ENCODE measurements at regions of chr5 and their contacts with region 1.

Region 1: DNA sequence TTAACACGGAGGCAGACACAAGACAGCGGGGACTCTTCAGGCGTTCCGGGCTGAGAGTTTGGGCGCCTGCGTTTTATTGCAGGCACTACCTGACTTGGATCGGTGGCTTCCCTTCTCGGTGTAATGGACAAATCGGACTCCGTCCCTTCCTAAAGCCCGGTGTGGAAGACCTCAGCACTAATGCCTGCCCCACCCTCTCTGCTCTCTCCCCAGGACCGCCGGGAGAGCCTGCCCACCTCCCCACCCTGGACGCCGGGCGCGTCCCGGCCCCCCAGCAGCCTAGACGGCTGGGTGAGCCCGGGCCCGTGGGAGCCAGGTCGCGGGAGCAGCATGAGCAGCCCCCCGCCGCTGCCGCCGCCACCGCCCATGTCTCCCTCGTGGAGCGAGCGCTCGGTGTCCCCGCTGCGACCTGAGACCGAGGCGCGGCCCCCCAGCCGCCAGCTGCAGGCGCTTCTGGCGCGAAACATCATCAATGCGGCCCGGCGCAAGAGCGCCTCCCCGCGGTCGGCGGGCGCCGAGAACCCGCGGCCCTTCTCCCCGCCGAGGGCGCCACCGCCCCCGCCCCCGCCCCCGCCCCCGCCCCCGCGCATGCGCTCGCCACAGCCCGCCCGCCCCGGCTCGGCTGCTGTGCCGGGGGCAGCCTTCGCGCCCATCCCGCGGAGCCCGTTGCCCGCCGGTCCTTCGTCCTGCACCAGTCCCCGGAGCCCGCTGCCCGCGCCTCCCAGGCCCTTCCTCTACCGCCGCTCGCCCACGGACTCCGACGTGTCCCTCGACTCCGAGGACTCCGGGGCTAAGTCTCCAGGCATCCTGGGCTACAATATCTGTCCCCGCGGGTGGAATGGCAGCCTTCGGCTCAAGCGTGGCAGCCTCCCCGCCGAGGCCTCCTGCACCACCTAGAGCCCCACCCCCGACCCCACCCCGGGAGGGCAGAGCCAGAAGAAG is 4.6 kb upstream of the MYOZ3 start:
- DNase-seq: peak in 9 of 10 donors; percentile 53 to 97 (median 65)

Region 2: DNA sequence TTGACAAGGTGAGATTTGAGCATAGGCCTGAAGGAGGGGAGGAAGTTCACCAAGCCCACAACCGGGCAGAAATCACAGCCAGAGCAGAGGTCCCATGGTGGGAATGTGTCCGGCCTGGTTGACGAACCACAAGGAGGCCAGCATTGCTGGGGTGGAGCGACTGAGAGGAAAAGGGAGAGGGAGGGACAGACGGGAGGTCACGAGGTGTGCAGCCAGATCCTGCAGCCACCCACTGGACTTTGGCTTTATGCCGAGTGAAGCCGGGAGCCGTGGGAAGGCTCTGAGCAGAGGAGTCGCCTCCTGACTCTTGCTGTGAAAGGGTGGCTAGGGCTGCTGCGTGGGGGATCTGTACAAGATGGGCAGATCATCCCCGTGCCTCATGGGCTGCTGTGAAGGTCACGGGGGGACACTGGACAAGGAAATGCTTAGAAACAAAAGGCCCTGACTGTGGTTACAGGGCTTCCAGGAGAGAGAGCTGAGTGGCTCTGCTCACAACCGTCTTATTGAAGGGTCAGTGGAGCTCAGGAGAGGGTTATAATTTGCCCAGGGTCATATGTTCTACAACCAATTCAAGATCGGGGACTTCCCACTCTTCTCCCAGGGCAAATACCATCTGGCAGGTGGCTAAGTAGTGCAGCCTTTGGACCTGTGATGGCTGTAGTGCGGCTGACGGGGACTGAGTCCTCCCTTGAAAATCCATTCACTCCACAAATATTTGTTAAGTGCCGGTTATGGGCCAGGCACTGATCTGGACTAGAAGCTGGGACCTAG is 228.2 kb before region 1 on chr5:
- intact Hi-C with region 1: no loop called
- DNase-seq: peak in 8 of 10 donors; percentile 11 to 94 (median 50)

Region 3: GRCh38 chr5:150560401-150561193 is 95.9 kb before region 1 on chr5:
- intact Hi-C with region 1: loop called (anchors 1 kb)
- DNase-seq: peak in 8 of 10 donors; percentile 59 to 94 (median 88)

Region 4: GRCh38 chr5:150751096-150751891 is 94.8 kb after region 1 on chr5:
- intact Hi-C with region 1: loop called (anchors 5 kb)
- DNase-seq: no peak

Measured in posterior cingulate gyrus (tissue), 11 donors.